Breast epithelium (tissue), 4 donors: ENCODE measurements at regions of chr10 and their contacts with region 1.

Region 1: GRCh38 chr10:30027057-30028005 is 32.1 kb downstream of the JCAD start:
- DNase-seq: peak; percentile 66 to 68
- H3K4me3 ChIP-seq: peak overlapping the region in 2 of 3 donors; percentile 24 to 56
- H3K27ac ChIP-seq: peak overlapping the region in 1 of 2 donors; percentile 20
- H3K4me1 ChIP-seq: no peaks in the 10 kb centered on the region
- H3K27me3 ChIP-seq: no peaks in the 10 kb centered on the region
- CTCF ChIP-seq: peak; percentile 18 to 55 (median 39)
- POLR2A ChIP-seq: no peak

Region 2: GRCh38 chr10:29955304-29955935 is 71.9 kb before region 1 on chr10:
- intact Hi-C with region 1: loop called (anchors 2 kb)
- DNase-seq: no peak
- H3K4me3 ChIP-seq: no peak overlapping the region
- H3K27ac ChIP-seq: no peak overlapping the region
- H3K4me1 ChIP-seq: no peaks in the 10 kb centered on the region
- H3K27me3 ChIP-seq: no peaks in the 10 kb centered on the region
- CTCF ChIP-seq: no peak
- POLR2A ChIP-seq: no peak

Region 3: GRCh38 chr10:30052062-30052461 is 24.7 kb after region 1 on chr10:
- intact Hi-C with region 1: loop called (anchors 1 kb)
- DNase-seq: no peak
- H3K4me3 ChIP-seq: no peak overlapping the region
- H3K27ac ChIP-seq: no peak overlapping the region
- H3K4me1 ChIP-seq: no peaks in the 10 kb centered on the region
- H3K27me3 ChIP-seq: no peaks in the 10 kb centered on the region
- CTCF ChIP-seq: no peak
- POLR2A ChIP-seq: no peak